Aorta (tissue), 5 donors: ENCODE measurements at regions of chr19 and their contacts with region 1.

Region 1: GRCh38 chr19:17097593-17098126 is 22.1 kb downstream of the MYO9B start:
- DNase-seq: no peak
- ATAC-seq: peak; percentile 31
- H3K4me3 ChIP-seq: no peak overlapping the region
- H3K27ac ChIP-seq: peak overlapping the region in 1 of 2 donors; percentile 72
- H3K4me1 ChIP-seq: no peaks in the 10 kb centered on the region
- H3K27me3 ChIP-seq: no peaks in the 10 kb centered on the region

Region 2: GRCh38 chr19:17107525-17108452 is 10.1 kb after region 1 on chr19:
- intact Hi-C with region 1: loop called in 1 of 2 experiments (anchors 2 kb)
- DNase-seq: peak; percentile 97
- ATAC-seq: peak; percentile 93
- H3K4me3 ChIP-seq: no peak overlapping the region
- H3K27ac ChIP-seq: peak overlapping the region; percentile 69 to 91
- H3K4me1 ChIP-seq: no peaks in the 10 kb centered on the region
- H3K27me3 ChIP-seq: no peaks in the 10 kb centered on the region